Endothelial cell of umbilical vein (primary cell): ENCODE measurements at regions of chr1 and their contacts with region 1.

Region 1: DNA sequence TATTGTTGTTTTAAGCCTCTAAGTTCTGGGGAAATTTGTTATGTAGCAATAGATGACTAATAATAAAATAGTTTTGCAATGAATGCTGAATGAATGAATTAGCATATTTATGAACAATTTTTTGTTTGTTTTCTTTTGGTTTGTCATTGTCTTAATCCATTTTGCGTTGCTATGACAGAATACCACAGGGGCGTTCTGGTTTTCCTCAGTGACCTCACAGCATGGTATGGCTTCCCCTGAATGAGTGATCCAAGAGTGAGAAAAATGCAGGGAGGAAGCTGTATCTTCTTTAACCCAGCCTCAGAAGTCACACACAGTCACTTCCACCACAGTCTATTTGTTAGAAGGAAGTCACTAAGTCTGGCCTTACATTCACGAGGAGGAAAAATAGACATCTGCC is 53.7 kb upstream of the HPDL start:
- DNase-seq: peak; percentile 71
- H3K4me3 ChIP-seq: no peak overlapping the region
- H3K27ac ChIP-seq: peak overlapping the region; percentile 86
- H3K4me1 ChIP-seq: peaks cover 11% of the 10 kb centered on the region
- H3K27me3 ChIP-seq: no peaks in the 10 kb centered on the region
- CTCF ChIP-seq: no peak
- POLR2A ChIP-seq: no peak

Region 2: GRCh38 chr1:44707959-44708831 is 564.8 kb before region 1 on chr1:
- CTCF ChIA-PET with region 1: no interaction called
- POLR2A ChIA-PET with region 1: no interaction called
- dilution Hi-C with region 1: no loop called
- intact Hi-C with region 1: no loop called
- DNase-seq: peak; percentile 61
- H3K4me3 ChIP-seq: no peak overlapping the region
- H3K27ac ChIP-seq: no peak overlapping the region
- H3K4me1 ChIP-seq: peaks cover 2% of the 10 kb centered on the region
- H3K27me3 ChIP-seq: peaks cover 2 to 5% of the 10 kb centered on the region in 2 experiments
- CTCF ChIP-seq: peak; percentile 61 to 63
- POLR2A ChIP-seq: no peak

Region 3: GRCh38 chr1:45246760-45247159 is 26.2 kb before region 1 on chr1:
- CTCF ChIA-PET with region 1: no interaction called
- POLR2A ChIA-PET with region 1: no interaction called
- dilution Hi-C with region 1: no loop called
- intact Hi-C with region 1: loop called (anchors 1 kb)
- DNase-seq: peak; percentile 97
- H3K4me3 ChIP-seq: no peak overlapping the region
- H3K27ac ChIP-seq: peak overlapping the region; percentile 89
- H3K4me1 ChIP-seq: peaks cover 14% of the 10 kb centered on the region
- H3K27me3 ChIP-seq: no peaks in the 10 kb centered on the region
- CTCF ChIP-seq: no peak
- POLR2A ChIP-seq: no peak